Activated B cell treated with CpG ODN at 0.5 μM for 24 hours (primary cell): ENCODE measurements at regions of chr3 and their contacts with region 1.

Region 1: GRCh38 chr3:31936420-31937060 is 44.5 kb downstream of the OSBPL10 start:
- DNase-seq: no peak
- ATAC-seq: peak; percentile 65
- H3K4me3 Mint-ChIP-seq: no peak overlapping the region
- H3K27ac Mint-ChIP-seq: no peak overlapping the region
- H3K4me1 Mint-ChIP-seq: peaks cover 30% of the 10 kb centered on the region
- H3K27me3 Mint-ChIP-seq: no peaks in the 10 kb centered on the region
- CTCF ChIP-seq: no peak

Region 2: DNA sequence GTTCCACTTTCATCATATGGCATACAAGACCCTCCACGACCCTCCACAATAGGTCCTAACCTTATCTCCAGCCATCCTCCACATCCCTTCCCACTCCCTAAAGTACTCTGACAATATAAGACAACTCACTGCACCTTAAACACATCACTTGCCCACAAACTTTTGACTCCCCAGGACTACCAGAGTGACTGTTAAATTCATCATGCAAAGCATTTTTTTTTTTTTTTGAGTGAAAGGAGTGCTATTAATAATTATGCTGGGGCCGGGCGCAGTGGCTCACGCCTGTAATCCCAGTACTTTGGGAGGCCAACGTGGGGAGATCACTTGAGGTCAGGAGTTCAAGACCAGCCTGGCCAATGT is 11.3 kb before region 1 on chr3:
- CTCF ChIA-PET with region 1: interaction called, 5 read pairs
- POLR2A ChIA-PET with region 1: interaction called, 10 read pairs
- intact Hi-C with region 1: loop called (anchors 1 kb)
- DNase-seq: no peak
- ATAC-seq: peak; percentile 51
- H3K4me3 Mint-ChIP-seq: peak overlapping the region; percentile 36
- H3K27ac Mint-ChIP-seq: peak overlapping the region; percentile 84
- H3K4me1 Mint-ChIP-seq: peaks cover 84% of the 10 kb centered on the region
- H3K27me3 Mint-ChIP-seq: no peaks in the 10 kb centered on the region
- CTCF ChIP-seq: no peak

Region 3: DNA sequence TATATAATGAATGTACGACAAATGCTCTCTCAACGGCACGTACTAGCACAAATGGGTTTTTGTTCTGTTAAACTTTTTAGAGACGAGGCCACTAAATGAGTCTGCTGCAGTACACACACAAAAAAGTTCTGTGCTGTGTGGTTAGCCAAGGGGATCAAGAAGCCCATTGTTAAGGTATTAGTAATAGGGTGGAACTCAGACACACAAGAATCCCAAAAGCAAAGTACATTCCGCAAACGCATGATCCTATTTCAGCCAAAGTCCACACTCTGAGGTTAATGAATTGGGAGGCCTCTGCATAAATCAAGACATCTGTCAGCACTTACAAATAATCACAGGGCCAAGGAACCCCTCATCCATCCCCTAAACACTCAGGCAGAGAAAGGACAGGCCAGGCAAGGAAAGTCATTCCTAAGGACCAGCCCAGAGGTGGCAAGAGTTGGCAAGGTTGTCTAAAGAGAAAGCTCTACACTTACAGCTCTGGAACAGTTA is 32.4 kb after region 1 on chr3:
- CTCF ChIA-PET with region 1: interaction called, 4 read pairs
- POLR2A ChIA-PET with region 1: interaction called, 10 read pairs
- intact Hi-C with region 1: no loop called
- DNase-seq: no peak
- ATAC-seq: no peak
- H3K4me3 Mint-ChIP-seq: no peak overlapping the region
- H3K27ac Mint-ChIP-seq: peak overlapping the region; percentile 94
- H3K4me1 Mint-ChIP-seq: peaks cover 83% of the 10 kb centered on the region
- H3K27me3 Mint-ChIP-seq: no peaks in the 10 kb centered on the region
- CTCF ChIP-seq: no peak